Mammary epithelial cell (primary cell): ENCODE measurements at regions of chr9 and their contacts with region 1.

Region 1: GRCh38 chr9:22257026-22257425 is 189.6 kb upstream of the DMRTA1 start:
- DNase-seq: peak; percentile 98
- H3K4me3 ChIP-seq: no peak overlapping the region
- H3K27ac ChIP-seq: peak overlapping the region; percentile 87
- H3K4me1 ChIP-seq: peaks cover 26% of the 10 kb centered on the region
- H3K27me3 ChIP-seq: no peaks in the 10 kb centered on the region
- CTCF ChIP-seq: no peak

Region 2: GRCh38 chr9:22452415-22453010 is 195.5 kb after region 1 on chr9:
- CTCF ChIA-PET with region 1: no interaction called
- dilution Hi-C with region 1: no loop called
- in situ Hi-C with region 1: loop called in 1 of 2 experiments (anchors 5 kb)
- intact Hi-C with region 1: loop called (anchors 5 kb)
- DNase-seq: no peak
- H3K4me3 ChIP-seq: no peak overlapping the region
- H3K27ac ChIP-seq: no peak overlapping the region
- H3K4me1 ChIP-seq: no peaks in the 10 kb centered on the region
- H3K27me3 ChIP-seq: no peaks in the 10 kb centered on the region
- CTCF ChIP-seq: peak; percentile 79 to 91